ENCODE measurements at regions of chr2 and their contacts with region 1.

Region 1: GRCh38 chr2:235614900-235615712 is 121.3 kb downstream of the AGAP1 start:
- DNase-seq: peak; percentile 53
- ATAC-seq: peak; percentile 87
- H3K4me3 ChIP-seq: peak overlapping the region in 2 of 3 experiments; percentile 36 to 52; a peak in 4 of 6 replicates
- H3K27ac ChIP-seq: peak overlapping the region; percentile 35
- H3K4me1 ChIP-seq: peaks cover 29% of the 10 kb centered on the region
- H3K27me3 ChIP-seq: no peaks in the 10 kb centered on the region
- CTCF ChIP-seq: no peak
- EP300 ChIP-seq: no peak
- POLR2A ChIP-seq: no peak
- RAD21 ChIP-seq: no peak

Region 2: GRCh38 chr2:235647877-235648276 is 32.8 kb after region 1 on chr2:
- CTCF ChIA-PET with region 1: no interaction called
- POLR2A ChIA-PET with region 1: no interaction called
- in situ Hi-C with region 1: no loop called
- intact Hi-C with region 1: loop called (anchors 5 kb)
- DNase-seq: no peak
- ATAC-seq: no peak
- H3K4me3 ChIP-seq: no peak overlapping the region
- H3K27ac ChIP-seq: no peak overlapping the region
- H3K4me1 ChIP-seq: peaks cover 21% of the 10 kb centered on the region
- H3K27me3 ChIP-seq: no peaks in the 10 kb centered on the region
- CTCF ChIP-seq: no peak
- EP300 ChIP-seq: no peak
- POLR2A ChIP-seq: no peak
- RAD21 ChIP-seq: no peak